ENCODE measurements at regions of chr19 and their contacts with region 1.

Region 1: GRCh38 chr19:33302175-33302973 is at the start of gene CEBPA:
- DNase-seq: peak; percentile 78
- ATAC-seq: peak; percentile 71
- H3K4me3 ChIP-seq: peak within 1 kb of the TSS; percentile 85 to 89 (median 88)
- H3K27ac ChIP-seq: peak within 1 kb of the TSS; percentile 95
- H3K4me1 ChIP-seq: peaks cover 51% of the 10 kb centered on the region
- H3K27me3 ChIP-seq: no peaks in the 10 kb centered on the region
- CTCF ChIP-seq: peak; percentile 68
- EP300 ChIP-seq: peak in 1 of 2 experiments; percentile 42; a peak in 1 of 4 replicates
- POLR2A ChIP-seq: peak; percentile 99
- RAD21 ChIP-seq: peak; percentile 96
- total RNA-seq, gene CEBPA: 99.9 and 103 TPM in 2 replicates

Region 2: GRCh38 chr19:33235269-33235995 is 66.9 kb before region 1 on chr19:
- CTCF ChIA-PET with region 1: no interaction called
- POLR2A ChIA-PET with region 1: interaction called, 8 read pairs
- in situ Hi-C with region 1: loop called (anchors 5 kb)
- intact Hi-C with region 1: no loop called
- DNase-seq: peak; percentile 78
- ATAC-seq: peak; percentile 86
- H3K4me3 ChIP-seq: peak overlapping the region in 2 of 3 experiments; percentile 37 to 53; a peak in 3 of 6 replicates
- H3K27ac ChIP-seq: no peak overlapping the region
- H3K4me1 ChIP-seq: peaks cover 44% of the 10 kb centered on the region
- H3K27me3 ChIP-seq: peaks cover 0 to 6% of the 10 kb centered on the region in 2 experiments; a peak in 1 of 5 replicates
- CTCF ChIP-seq: peak; percentile 95
- EP300 ChIP-seq: no peak
- POLR2A ChIP-seq: no peak
- RAD21 ChIP-seq: peak; percentile 89

Region 3: DNA sequence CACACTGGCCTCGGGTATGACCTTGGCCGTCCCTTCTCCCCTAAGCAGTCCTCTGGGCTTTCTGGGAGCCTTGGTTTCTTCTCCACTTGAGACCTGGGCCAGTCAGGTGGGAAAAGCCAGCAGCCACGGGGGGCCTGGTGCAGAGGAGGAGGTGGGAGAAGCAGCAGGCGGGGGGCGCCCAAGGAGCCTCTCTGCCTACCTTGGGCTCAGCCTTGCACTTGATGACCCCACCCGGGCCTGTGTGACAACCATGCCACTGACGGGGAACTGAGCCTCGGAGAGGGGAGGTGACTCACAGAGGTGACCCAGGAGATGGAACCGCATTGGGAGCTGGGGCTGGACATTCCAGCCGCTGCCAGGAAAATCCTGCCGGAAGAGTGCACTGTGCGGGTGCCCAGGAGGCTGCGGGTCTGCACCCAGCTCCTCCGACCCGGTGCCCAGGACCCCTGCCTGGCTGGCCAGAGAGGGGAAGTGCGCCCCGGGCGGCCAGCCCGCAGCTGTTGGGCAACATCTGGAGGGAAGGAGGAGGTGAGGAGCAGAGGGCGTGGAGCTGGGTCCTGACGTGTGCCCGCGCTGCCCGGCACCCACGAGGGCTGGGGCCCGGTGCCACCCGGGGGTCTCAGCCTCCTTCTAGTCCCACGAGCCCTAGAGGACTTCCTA is 53.3 kb before region 1 on chr19:
- CTCF ChIA-PET with region 1: no interaction called
- POLR2A ChIA-PET with region 1: interaction called, 51 read pairs
- in situ Hi-C with region 1: no loop called
- intact Hi-C with region 1: loop called (anchors 2 kb)
- DNase-seq: peak; percentile 53
- ATAC-seq: peak; percentile 59
- H3K4me3 ChIP-seq: peak overlapping the region; percentile 25 to 69 (median 27); a peak in 5 of 6 replicates
- H3K27ac ChIP-seq: peak overlapping the region; percentile 83
- H3K4me1 ChIP-seq: peaks cover 62% of the 10 kb centered on the region
- H3K27me3 ChIP-seq: peaks cover 3 to 4% of the 10 kb centered on the region in 2 experiments; a peak in 3 of 5 replicates
- CTCF ChIP-seq: peak; percentile 69
- EP300 ChIP-seq: no peak
- POLR2A ChIP-seq: no peak
- RAD21 ChIP-seq: peak; percentile 36; the same call in 1 of the 2 replicates

Region 4: DNA sequence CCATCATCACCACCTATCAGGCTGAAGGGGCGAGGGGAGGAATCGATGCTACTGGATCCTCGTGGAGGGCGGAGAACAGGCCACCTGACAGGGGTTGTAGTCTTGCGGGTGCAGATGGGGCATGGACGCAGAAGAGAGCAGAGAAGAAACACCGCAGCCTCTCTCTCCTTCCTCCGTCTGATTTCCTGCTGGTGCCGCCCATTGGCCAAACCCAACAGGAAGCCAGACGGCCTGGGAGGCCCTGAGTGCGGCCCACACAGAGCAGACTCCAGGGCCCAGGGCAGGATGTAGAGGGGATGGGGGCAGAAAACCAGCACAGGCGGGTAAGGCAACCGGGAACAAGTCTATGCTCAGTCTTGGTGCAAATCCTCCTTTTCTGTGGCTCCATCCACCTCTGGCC is 15.5 kb before region 1 on chr19:
- CTCF ChIA-PET with region 1: no interaction called
- POLR2A ChIA-PET with region 1: interaction called, 380 read pairs
- in situ Hi-C with region 1: no loop called
- intact Hi-C with region 1: no loop called
- DNase-seq: no peak
- ATAC-seq: no peak
- H3K4me3 ChIP-seq: no peak overlapping the region
- H3K27ac ChIP-seq: no peak overlapping the region
- H3K4me1 ChIP-seq: peaks cover 71% of the 10 kb centered on the region
- H3K27me3 ChIP-seq: no peaks in the 10 kb centered on the region
- CTCF ChIP-seq: no peak
- EP300 ChIP-seq: no peak
- POLR2A ChIP-seq: no peak
- RAD21 ChIP-seq: no peak

Region 5: GRCh38 chr19:33373701-33374421 is 71.5 kb after region 1 on chr19 and contains the start of gene CEBPG:
- CTCF ChIA-PET with region 1: interaction called, 5 read pairs
- POLR2A ChIA-PET with region 1: interaction called, 33 read pairs
- in situ Hi-C with region 1: no loop called
- intact Hi-C with region 1: loop called (anchors 2 kb)
- DNase-seq: no peak
- ATAC-seq: peak; percentile 49
- H3K4me3 ChIP-seq: peak within 1 kb of the TSS; percentile 74 to 90 (median 89)
- H3K27ac ChIP-seq: peak within 1 kb of the TSS; percentile 96
- H3K4me1 ChIP-seq: peaks cover 44% of the 10 kb centered on the region
- H3K27me3 ChIP-seq: peaks cover 0 to 3% of the 10 kb centered on the region in 2 experiments; a peak in 2 of 5 replicates
- CTCF ChIP-seq: no peak; the same call in 1 of the 2 replicates
- EP300 ChIP-seq: 0 out of 4 replicates have a peak, but pooled peaks of 1 of the 2 experiments have one; percentile 48
- POLR2A ChIP-seq: peak; percentile 66 to 83
- RAD21 ChIP-seq: peak; percentile 67; the same call in 1 of the 2 replicates
- total RNA-seq, gene CEBPG: 34.3 and 49.8 TPM in 2 replicates

Region 6: GRCh38 chr19:33399745-33400681 is 97.6 kb after region 1 on chr19:
- CTCF ChIA-PET with region 1: no interaction called
- POLR2A ChIA-PET with region 1: interaction called, 32 read pairs
- in situ Hi-C with region 1: loop called (anchors 5 kb)
- intact Hi-C with region 1: no loop called
- DNase-seq: no peak
- ATAC-seq: no peak; the same call in 2 of the 3 replicates
- H3K4me3 ChIP-seq: no peak overlapping the region
- H3K27ac ChIP-seq: peak overlapping the region; percentile 95
- H3K4me1 ChIP-seq: peaks cover 100% of the 10 kb centered on the region
- H3K27me3 ChIP-seq: no peaks in the 10 kb centered on the region
- CTCF ChIP-seq: peak; percentile 23
- EP300 ChIP-seq: peak in 1 of 2 experiments; percentile 49; a peak in 1 of 4 replicates
- POLR2A ChIP-seq: peak in 1 of 2 experiments; percentile 49; a peak in 1 of 4 replicates
- RAD21 ChIP-seq: no peak

Measured in HepG2 (cell line).